Activated CD4-positive, alpha-beta T cell treated with anti-CD3 and anti-CD28 coated beads, Interleukin-2, amount 10 ng/mL, durations not matched to agents 24 days and 14 days (primary cell): ENCODE measurements at regions of chr11 and their contacts with region 1.

Region 1: GRCh38 chr11:11157185-11157584 is 195.9 kb downstream of the CSNK2A3 start:
- DNase-seq: peak; percentile 84
- H3K4me3 Mint-ChIP-seq: no peak overlapping the region
- H3K27ac Mint-ChIP-seq: no peak overlapping the region
- H3K4me1 Mint-ChIP-seq: peaks cover 13% of the 10 kb centered on the region
- H3K27me3 Mint-ChIP-seq: peaks cover 3% of the 10 kb centered on the region

Region 2: DNA sequence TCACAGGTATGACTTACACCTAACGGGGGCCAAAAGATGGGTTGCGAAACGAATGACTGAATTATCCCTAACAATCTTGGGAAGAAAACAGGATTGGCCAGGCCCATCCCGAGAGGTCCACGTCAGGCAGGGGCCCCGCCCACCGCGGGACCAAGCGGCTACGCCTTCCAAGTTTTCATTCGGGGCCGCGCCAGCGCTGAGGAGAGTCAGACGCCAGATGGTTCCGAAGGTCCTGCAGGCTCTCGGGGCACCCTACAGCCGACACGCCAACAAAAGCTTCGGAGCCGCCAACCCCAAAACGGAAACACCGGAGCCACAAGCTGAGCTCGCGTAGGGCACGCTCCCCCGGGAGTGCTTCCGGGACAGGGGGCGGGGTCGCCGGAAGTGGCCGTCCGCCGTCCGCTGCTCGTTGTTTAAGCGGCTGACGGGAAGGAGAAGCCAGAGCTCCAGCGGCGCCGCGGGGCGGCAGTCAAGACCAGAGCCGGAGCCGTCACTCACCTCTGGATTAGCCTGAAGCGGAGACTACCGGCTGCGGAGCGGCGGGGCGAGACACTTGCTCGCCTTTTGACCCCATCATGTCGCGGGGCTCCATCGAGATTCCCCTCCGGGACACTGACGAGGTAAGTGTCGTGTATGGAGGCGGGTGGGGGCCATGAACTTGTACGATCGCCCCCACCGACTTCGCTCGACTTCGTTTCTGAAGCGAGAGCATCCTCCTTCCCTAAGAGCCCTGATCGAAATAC is 406.2 kb before region 1 on chr11 and contains the start of gene CTR9:
- intact Hi-C with region 1: no loop called
- DNase-seq: peak; percentile 98
- H3K4me3 Mint-ChIP-seq: peak within 1 kb of the TSS; percentile 95
- H3K27ac Mint-ChIP-seq: peak within 1 kb of the TSS; percentile 89
- H3K4me1 Mint-ChIP-seq: peaks cover 32% of the 10 kb centered on the region
- H3K27me3 Mint-ChIP-seq: no peaks in the 10 kb centered on the region
- total RNA-seq, gene CTR9: 43.9 and 44.3 TPM in 2 replicates

Region 3: GRCh38 chr11:11036848-11037732 is 120.1 kb before region 1 on chr11:
- intact Hi-C with region 1: loop called (anchors 1 kb)
- DNase-seq: peak; percentile 78
- H3K4me3 Mint-ChIP-seq: no peak overlapping the region
- H3K27ac Mint-ChIP-seq: no peak overlapping the region
- H3K4me1 Mint-ChIP-seq: no peaks in the 10 kb centered on the region
- H3K27me3 Mint-ChIP-seq: peaks cover 8% of the 10 kb centered on the region